ENCODE measurements at regions of chr11 and their contacts with region 1.

Region 1: GRCh38 chr11:125621987-125622386 is 3.0 kb upstream of the CHEK1 start:
- DNase-seq: no peak
- H3K4me3 ChIP-seq: no peak overlapping the region
- H3K27ac ChIP-seq: no peak overlapping the region
- H3K4me1 ChIP-seq: no peaks in the 10 kb centered on the region
- H3K27me3 ChIP-seq: no peaks in the 10 kb centered on the region
- CTCF ChIP-seq: no peak
- POLR2A ChIP-seq: no peak

Region 2: GRCh38 chr11:125559888-125560287 is 62.1 kb before region 1 on chr11:
- intact Hi-C with region 1: loop called (anchors 2 kb)
- DNase-seq: no peak
- H3K4me3 ChIP-seq: no peak overlapping the region
- H3K27ac ChIP-seq: no peak overlapping the region
- H3K4me1 ChIP-seq: no peaks in the 10 kb centered on the region
- H3K27me3 ChIP-seq: no peaks in the 10 kb centered on the region
- CTCF ChIP-seq: no peak
- POLR2A ChIP-seq: no peak

Region 3: GRCh38 chr11:125588505-125588904 is 33.5 kb before region 1 on chr11:
- intact Hi-C with region 1: no loop called
- DNase-seq: no peak
- H3K4me3 ChIP-seq: no peak overlapping the region
- H3K27ac ChIP-seq: no peak overlapping the region
- H3K4me1 ChIP-seq: peaks cover 0 to 1% of the 10 kb centered on the region in 2 donors
- H3K27me3 ChIP-seq: no peaks in the 10 kb centered on the region
- CTCF ChIP-seq: no peak
- POLR2A ChIP-seq: no peak

Region 4: DNA sequence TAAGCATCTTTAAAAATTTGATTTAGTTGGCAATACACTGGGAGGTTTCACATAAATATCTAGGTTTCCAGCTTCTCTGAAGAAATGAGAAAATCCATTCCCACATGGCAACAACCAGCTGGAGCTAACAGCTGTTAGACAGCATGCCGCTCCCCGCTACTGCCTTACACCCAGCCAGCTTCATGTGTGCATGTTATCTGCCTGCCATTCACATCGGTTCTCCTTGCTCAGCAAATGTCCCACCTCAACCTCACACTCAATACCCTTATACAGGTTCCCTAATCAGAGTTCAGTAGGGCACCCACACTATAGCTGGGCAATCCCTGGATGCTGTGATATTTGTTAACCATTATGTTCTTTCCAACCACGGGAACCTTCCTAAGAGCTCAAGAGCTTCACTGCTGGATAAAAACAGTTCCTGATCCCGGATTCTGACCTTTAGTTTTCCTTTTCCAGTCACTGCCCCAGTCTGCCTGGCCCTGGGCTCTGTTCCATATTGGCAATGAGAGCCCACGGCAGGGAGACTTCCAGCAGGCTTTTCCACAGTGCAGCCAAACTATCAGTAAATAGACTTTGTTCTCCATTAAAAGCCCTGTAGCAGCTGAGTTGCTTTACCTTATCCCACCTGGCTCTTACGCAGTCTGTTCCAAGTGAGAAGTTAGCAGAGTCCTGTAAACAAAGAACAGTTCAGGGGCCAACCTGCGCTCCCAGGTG is 580.8 kb after region 1 on chr11:
- intact Hi-C with region 1: no loop called
- DNase-seq: no peak
- H3K4me3 ChIP-seq: no peak overlapping the region
- H3K27ac ChIP-seq: no peak overlapping the region
- H3K4me1 ChIP-seq: no peaks in the 10 kb centered on the region
- H3K27me3 ChIP-seq: no peaks in the 10 kb centered on the region
- CTCF ChIP-seq: no peak
- POLR2A ChIP-seq: no peak